ENCODE measurements at regions of chr1 and their contacts with region 1.

Region 1: DNA sequence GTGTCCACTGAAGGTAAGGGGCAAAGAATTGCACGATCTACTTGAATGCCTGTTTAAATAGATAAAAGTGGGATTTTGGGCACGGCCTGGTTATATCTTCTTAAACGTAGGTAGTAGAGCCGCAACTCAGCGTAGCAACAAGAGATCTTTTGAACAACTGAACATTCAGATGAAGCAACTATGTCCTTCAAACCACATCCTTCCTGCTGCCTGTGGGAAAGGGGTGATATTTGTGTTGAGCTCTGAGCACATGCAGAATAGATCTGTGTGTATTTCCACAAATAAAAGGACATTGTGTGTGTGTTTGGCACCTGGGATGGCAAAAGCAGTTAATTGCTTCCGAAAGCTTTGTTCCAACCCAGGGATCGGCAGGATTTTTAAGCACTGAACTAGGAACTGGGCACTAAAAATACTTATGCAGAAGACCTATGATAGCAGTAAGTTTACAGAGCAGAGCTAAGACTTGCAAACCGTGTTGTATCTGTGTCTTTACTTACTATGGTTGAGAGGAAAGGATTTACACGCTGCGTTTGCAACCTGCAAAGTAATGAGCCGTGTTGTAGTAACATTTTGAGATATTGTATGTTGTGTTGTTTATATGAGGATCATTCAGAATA is 333.4 kb downstream of the CHRM3 start:
- DNase-seq: peak; percentile 56
- H3K4me3 Mint-ChIP-seq: peak overlapping the region; percentile 84
- H3K27ac Mint-ChIP-seq: peak overlapping the region; percentile 92
- H3K4me1 Mint-ChIP-seq: peaks cover 53% of the 10 kb centered on the region
- H3K27me3 Mint-ChIP-seq: no peaks in the 10 kb centered on the region

Region 2: DNA sequence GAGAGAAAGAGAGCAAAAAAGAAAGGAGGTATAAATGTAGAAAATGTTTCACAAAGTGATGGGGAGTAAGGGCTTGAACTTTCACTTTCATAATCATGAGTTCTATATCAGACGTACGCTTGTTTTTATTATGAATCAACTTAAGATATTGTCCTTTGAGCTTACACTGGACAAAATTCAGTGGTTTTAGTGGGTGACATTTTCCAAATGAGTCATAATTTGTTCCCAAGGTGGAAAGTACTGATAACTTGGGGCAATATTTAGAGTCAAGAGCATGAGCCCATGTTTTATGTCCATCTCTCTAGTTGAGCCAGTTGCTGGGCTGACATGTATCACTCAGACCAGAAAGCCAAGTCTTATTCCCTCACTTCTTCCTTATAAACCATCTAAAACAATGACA is 171.8 kb before region 1 on chr1:
- intact Hi-C with region 1: loop called (anchors 2 kb)
- DNase-seq: no peak
- H3K4me3 Mint-ChIP-seq: peak overlapping the region; percentile 43
- H3K27ac Mint-ChIP-seq: peak overlapping the region; percentile 15
- H3K4me1 Mint-ChIP-seq: peaks cover 16% of the 10 kb centered on the region
- H3K27me3 Mint-ChIP-seq: no peaks in the 10 kb centered on the region

Region 3: DNA sequence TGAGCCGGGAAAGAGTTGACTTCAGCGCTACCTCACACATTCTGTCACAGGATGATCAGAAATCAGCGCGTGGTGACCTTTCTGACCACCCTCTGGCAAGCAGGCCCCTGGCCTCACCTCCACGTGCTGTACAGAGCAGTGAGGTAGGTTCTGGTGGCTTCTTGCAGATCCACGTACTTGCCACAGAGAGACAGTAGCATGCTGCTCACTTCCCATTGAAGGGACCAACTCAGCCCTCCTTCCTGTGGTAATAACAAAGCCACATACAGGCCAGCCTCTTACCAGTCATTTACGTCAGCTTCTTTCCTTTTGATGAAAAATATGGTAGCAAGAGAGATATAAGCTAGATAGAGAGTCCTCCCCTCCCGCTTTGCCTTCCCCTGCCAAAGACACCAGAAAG is 132.7 kb before region 1 on chr1:
- intact Hi-C with region 1: loop called (anchors 5 kb)
- DNase-seq: peak; percentile 18
- H3K4me3 Mint-ChIP-seq: no peak overlapping the region
- H3K27ac Mint-ChIP-seq: no peak overlapping the region
- H3K4me1 Mint-ChIP-seq: peaks cover 8% of the 10 kb centered on the region
- H3K27me3 Mint-ChIP-seq: peaks cover 12% of the 10 kb centered on the region

Region 4: DNA sequence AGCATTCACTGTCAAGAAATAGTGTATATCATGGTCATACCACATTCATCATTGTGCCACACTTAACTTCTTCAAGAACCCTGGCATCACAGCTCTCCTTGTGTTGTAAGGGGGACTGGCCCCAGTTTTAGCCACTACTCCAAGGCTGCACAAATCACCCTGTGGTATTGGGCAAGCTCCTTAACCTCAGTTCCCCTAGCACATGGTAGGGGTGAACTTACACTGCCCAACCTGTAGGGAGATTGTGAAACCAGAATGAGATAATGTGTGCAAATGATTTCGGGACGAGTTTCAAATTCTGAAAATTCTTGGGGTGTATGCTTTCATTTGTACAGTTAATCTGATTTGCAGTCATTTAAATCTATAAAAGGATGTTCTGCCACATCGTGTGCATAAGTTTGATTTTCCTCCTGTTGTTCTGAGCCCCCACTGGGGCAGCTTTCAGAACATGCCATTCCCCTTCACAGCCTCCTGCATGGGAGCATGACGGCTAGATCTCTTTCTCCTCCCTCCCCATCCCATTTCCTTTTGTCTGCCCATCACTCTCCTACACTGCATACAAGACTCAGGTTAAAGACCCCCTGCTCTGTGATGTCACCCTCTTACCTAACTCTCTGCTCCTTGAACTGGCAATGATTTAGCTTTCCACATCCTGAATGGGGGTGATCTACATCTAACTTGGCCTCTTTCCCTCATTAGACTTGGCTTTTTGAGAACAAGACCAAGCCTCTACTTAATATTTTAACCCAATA is 43.1 kb before region 1 on chr1:
- intact Hi-C with region 1: no loop called
- DNase-seq: no peak
- H3K4me3 Mint-ChIP-seq: no peak overlapping the region
- H3K27ac Mint-ChIP-seq: no peak overlapping the region
- H3K4me1 Mint-ChIP-seq: no peaks in the 10 kb centered on the region
- H3K27me3 Mint-ChIP-seq: peaks cover 14% of the 10 kb centered on the region

Region 5: GRCh38 chr1:239708622-239709021 is 11.1 kb before region 1 on chr1:
- intact Hi-C with region 1: loop called (anchors 1 kb)
- DNase-seq: no peak
- H3K4me3 Mint-ChIP-seq: no peak overlapping the region
- H3K27ac Mint-ChIP-seq: no peak overlapping the region
- H3K4me1 Mint-ChIP-seq: peaks cover 20% of the 10 kb centered on the region
- H3K27me3 Mint-ChIP-seq: no peaks in the 10 kb centered on the region

Region 6: DNA sequence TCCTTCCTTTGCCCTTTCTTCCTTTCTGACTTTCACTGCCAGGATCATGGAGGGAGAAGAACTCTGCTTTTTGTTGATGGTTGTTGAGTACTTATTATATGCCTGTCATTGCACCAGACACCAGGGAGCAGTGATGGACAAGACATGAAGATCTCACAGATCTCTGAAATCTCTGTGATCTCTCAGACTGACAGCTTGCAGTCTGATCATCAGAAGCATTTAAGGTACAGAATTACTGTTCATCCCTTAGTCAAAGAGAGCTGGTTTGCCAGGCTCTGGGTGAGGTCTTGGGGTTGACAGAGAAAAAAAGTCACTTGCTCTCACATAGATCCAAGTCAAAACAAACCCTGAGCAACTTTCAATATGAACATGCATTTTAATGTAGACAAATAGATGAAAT is 72.4 kb after region 1 on chr1:
- intact Hi-C with region 1: loop called (anchors 2 kb)
- DNase-seq: no peak
- H3K4me3 Mint-ChIP-seq: no peak overlapping the region
- H3K27ac Mint-ChIP-seq: no peak overlapping the region
- H3K4me1 Mint-ChIP-seq: peaks cover 6% of the 10 kb centered on the region
- H3K27me3 Mint-ChIP-seq: peaks cover 12% of the 10 kb centered on the region

Region 7: DNA sequence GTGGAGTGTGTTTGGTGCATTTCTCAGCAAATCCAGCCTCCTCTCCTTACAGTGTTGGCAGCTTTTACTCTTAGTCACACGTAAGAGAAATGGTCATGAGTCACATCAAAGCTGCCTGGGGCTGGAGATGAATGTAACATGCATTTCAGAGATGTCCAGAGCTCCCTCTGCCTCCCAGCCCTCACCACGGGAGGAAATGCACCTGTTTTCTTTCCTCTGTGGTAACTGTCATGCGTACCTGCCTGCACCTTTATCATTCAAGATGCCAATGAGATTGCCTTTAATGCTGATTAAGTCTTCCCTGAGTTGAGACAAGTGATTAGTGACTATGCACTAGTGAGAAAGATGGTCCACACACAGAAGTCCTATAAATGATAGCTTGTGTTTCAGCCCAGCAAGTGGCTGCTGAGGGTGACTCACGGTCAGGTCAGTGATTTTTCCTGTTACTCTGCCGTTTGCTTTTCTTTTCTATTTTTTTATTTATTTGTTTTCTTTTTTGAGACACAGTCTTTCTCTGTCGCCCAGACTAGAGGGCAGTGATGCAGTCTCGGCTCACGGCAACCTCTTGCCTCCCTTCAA is 94.6 kb after region 1 on chr1:
- intact Hi-C with region 1: loop called (anchors 1 kb)
- DNase-seq: no peak
- H3K4me3 Mint-ChIP-seq: no peak overlapping the region
- H3K27ac Mint-ChIP-seq: peak overlapping the region; percentile 3
- H3K4me1 Mint-ChIP-seq: peaks cover 27% of the 10 kb centered on the region
- H3K27me3 Mint-ChIP-seq: peaks cover 2% of the 10 kb centered on the region

Region 8: DNA sequence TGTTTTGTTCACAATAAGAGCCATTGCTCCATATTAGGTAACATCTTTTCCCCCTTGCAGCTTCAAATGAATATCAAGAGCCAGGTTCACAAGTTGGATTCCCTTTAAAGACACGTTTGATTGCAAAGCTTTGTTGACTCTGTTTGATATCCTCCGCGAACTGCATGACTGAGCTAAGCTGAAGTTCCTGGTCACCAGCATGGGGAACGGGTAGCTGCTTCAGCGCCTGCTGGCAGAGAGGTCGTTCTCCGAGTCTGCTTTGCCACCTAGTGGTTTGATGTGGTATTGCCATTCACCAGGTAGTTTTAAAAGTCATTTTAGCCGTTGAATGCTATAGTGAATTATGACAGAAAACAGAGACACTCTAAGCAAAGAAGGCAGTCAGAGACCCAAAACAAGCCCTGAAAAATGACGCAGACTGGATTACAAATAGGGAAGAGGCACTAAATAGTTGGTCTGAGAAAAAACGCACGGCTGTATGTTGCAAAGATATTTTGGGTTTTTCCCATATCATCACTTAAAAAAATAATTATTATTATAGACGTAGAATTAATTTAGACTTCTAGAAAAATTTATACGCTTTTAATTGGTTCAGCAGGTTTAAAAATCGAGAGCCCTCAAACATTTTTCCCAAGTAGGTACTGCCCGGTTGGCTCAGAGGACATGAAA is 178.4 kb after region 1 on chr1:
- intact Hi-C with region 1: loop called (anchors 10 kb)
- DNase-seq: peak; percentile 57
- H3K4me3 Mint-ChIP-seq: no peak overlapping the region
- H3K27ac Mint-ChIP-seq: no peak overlapping the region
- H3K4me1 Mint-ChIP-seq: no peaks in the 10 kb centered on the region
- H3K27me3 Mint-ChIP-seq: peaks cover 13% of the 10 kb centered on the region